ENCODE measurements at regions of chr13 and their contacts with region 1.

Region 1: DNA sequence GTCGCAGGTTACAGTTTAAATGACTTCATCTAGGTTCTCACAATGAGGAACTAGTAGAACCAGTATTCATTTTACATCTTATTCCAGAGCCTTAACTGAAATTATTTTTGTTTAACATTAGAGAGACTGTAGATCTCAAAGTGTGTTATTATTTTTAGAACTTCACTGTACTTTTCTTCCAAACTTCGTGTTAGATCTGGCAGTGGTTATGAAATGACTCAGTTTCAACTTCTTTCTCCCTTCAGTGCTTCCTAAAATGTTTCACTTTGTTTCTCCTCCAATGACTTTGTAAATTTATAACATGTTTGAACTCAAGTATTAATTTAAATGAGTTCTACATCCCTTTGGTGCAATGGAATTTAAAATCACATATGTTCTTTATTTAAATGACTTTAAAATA is 139.3 kb downstream of the PCDH9 start:
- DNase-seq: no peak
- ATAC-seq: no peak
- H3K4me3 ChIP-seq: no peak overlapping the region
- H3K27ac ChIP-seq: no peak overlapping the region
- H3K4me1 ChIP-seq: peaks cover 0 to 24% (median 7%) of the 10 kb centered on the region in 9 donors
- H3K27me3 ChIP-seq: no peaks in the 10 kb centered on the region
- CTCF ChIP-seq: no peak

Region 2: GRCh38 chr13:65943024-65943423 is 1147.8 kb before region 1 on chr13:
- intact Hi-C with region 1: loop called in 1 of 10 experiments (anchors 10 kb)
- DNase-seq: no peak
- ATAC-seq: peak in 2 of 8 donors; percentile 32 to 35
- H3K4me3 ChIP-seq: peak overlapping the region in 3 of 10 donors; percentile 5 to 28 (median 6)
- H3K27ac ChIP-seq: peak overlapping the region in 2 of 10 donors; percentile 40 to 47
- H3K4me1 ChIP-seq: peaks cover 0 to 12% (median 0%) of the 10 kb centered on the region in 9 donors
- H3K27me3 ChIP-seq: no peaks in the 10 kb centered on the region
- CTCF ChIP-seq: no peak

Region 3: GRCh38 chr13:67134417-67135129 is 43.7 kb after region 1 on chr13:
- intact Hi-C with region 1: loop called in 2 of 10 experiments (anchors 5 kb)
- DNase-seq: no peak
- ATAC-seq: peak in 6 of 8 donors; percentile 42 to 68 (median 61)
- H3K4me3 ChIP-seq: peak overlapping the region in 9 of 10 donors; percentile 2 to 40 (median 30)
- H3K27ac ChIP-seq: peak overlapping the region; percentile 33 to 83 (median 73)
- H3K4me1 ChIP-seq: peaks cover 0 to 42% (median 14%) of the 10 kb centered on the region in 9 donors
- H3K27me3 ChIP-seq: no peaks in the 10 kb centered on the region
- CTCF ChIP-seq: no peak

Region 4: DNA sequence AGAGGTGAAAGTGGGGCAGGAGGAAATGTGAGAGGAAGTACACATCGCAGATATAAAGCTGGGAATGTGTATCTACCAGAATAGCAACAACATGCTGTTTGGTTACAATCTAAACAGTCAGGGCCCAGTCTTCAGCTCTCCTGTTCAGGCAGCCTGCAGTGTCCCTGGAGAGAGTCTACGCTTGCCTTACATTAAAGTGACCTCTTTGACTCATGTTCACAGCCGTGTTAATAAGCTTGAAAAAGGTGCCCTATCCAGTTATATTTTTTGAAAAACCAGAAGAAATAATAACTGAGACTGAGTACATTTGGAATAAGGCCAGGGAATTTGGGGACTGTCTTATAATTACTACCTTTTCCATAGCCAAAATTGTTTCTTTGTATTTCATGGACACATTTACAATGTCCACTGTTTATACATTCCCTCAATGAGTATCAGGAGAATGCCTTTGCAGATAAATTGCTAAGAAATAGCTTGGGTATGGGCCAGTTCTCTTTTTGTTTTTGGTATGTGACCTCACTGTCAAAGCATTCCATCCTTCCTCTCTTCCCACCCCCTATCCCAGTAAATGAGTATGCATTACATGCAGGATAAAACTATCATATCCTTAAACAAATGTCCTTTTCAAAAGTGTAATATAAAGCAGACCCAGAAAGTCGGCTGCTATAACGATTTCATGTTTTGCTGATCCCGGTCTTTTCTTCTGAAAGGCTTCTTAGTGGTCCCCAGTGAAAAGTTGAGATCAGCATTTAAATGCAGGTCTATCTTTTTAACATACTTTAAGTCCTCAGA is 56.7 kb after region 1 on chr13:
- intact Hi-C with region 1: loop called in 1 of 10 experiments (anchors 5 kb)
- DNase-seq: peak in 1 of 2 donors; percentile 15
- ATAC-seq: peak; percentile 71 to 94 (median 87)
- H3K4me3 ChIP-seq: peak overlapping the region in 6 of 10 donors; percentile 4 to 29 (median 21)
- H3K27ac ChIP-seq: peak overlapping the region; percentile 38 to 85 (median 76)
- H3K4me1 ChIP-seq: peaks cover 0 to 54% (median 31%) of the 10 kb centered on the region in 9 donors
- H3K27me3 ChIP-seq: no peaks in the 10 kb centered on the region
- CTCF ChIP-seq: no peak